ENCODE measurements at regions of chr1 and their contacts with region 1.

Region 1: DNA sequence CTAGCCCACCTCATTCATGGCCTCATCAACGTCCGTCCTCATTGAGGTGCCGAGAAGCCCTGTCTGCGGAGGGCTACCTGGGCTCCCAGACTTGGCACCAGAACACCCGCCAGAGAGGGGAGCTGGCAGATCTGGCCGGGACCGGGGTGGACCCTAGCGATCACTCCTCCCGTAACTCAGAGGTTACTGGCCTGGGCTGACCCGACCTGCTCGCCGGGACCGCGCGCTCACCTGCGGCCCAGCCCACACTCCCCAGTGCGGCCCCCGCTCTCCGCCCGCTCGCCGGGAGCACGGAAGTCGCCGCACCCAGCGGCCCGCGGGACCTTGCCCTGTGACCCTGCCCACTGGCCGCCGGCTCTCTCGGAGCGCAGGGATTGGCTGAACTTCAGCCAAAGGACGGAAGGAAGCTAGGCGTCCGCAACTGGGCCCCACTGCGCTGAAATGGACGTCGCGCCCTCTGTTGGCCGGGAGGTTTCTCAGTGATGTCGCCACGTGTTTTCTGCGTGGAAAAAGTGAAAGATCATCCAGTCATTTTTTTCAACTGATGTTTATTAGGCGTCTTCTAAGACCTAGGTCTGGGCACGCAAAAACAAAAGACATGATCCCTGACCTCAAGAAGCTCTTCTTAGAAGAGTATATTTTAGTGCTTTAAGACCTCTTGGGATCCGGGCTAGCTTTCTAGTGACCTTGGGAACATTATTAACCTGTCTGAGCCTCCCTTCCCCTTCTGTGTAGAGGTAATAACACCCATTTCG is at the start of gene SMIM12:
- DNase-seq: peak; percentile 76 to 94 (median 92)
- ATAC-seq: peak; percentile 84
- H3K4me3 ChIP-seq: peak within 1 kb of the TSS; percentile 78 to 89
- H3K4me3 Mint-ChIP-seq: peak within 1 kb of the TSS; percentile 90
- H3K27ac ChIP-seq: peak within 1 kb of the TSS; percentile 69 to 89
- H3K27ac Mint-ChIP-seq: peak within 1 kb of the TSS; percentile 96
- H3K4me1 ChIP-seq: peaks cover 46% of the 10 kb centered on the region
- H3K4me1 Mint-ChIP-seq: peaks cover 63% of the 10 kb centered on the region
- H3K27me3 ChIP-seq: no peaks in the 10 kb centered on the region
- H3K27me3 Mint-ChIP-seq: no peaks in the 10 kb centered on the region
- CTCF ChIP-seq: peak; percentile 73
- total RNA-seq, gene SMIM12: 46.6 to 48.7 TPM

Region 2: GRCh38 chr1:34824817-34825454 is 34.7 kb before region 1 on chr1:
- CTCF ChIA-PET with region 1: no interaction called
- POLR2A ChIA-PET with region 1: no interaction called
- intact Hi-C with region 1: no loop called
- DNase-seq: no peak
- ATAC-seq: no peak
- H3K4me3 ChIP-seq: no peak overlapping the region
- H3K4me3 Mint-ChIP-seq: no peak overlapping the region
- H3K27ac ChIP-seq: no peak overlapping the region
- H3K27ac Mint-ChIP-seq: no peak overlapping the region
- H3K4me1 ChIP-seq: no peaks in the 10 kb centered on the region
- H3K4me1 Mint-ChIP-seq: no peaks in the 10 kb centered on the region
- H3K27me3 ChIP-seq: no peaks in the 10 kb centered on the region
- H3K27me3 Mint-ChIP-seq: no peaks in the 10 kb centered on the region
- CTCF ChIP-seq: no peak

Region 3: DNA sequence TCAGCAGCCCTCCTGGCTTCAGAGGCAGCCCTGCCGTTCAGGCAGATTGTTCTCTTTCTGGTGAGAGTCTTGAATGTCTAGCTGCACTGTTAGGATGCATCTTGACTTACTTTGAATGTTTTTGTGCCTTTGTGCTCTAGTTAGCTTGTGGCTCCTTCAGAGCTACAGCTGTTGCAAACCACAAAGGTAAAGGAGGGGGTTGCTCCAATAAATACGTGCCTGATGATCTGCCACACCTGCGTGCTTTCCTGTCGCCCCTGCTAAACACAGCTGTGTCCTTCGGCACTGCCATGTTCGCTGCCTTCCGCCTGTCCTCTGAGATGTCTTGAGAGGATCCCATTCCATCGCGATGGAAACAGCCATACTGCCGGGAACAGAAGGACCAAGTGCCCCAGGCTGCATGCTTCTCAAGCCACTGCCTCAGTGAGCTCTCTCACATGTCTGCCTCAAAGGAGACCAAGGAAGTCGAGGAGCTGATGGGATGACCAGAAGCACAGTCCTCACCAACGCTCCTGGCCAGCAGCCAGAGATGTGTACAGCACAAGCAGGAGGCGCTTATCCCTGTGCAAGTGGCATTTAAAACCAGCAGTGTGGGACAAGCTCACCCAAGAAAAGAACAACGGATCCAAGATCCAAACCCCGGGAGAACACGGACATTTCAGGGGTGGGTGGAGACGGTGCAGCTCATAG is 12.0 kb after region 1 on chr1:
- CTCF ChIA-PET with region 1: interaction called, 129 read pairs
- POLR2A ChIA-PET with region 1: interaction called, 3 read pairs
- intact Hi-C with region 1: no loop called
- DNase-seq: peak in 1 of 9 experiments; percentile 35
- ATAC-seq: peak; percentile 59
- H3K4me3 ChIP-seq: no peak overlapping the region
- H3K4me3 Mint-ChIP-seq: peak overlapping the region; percentile 59
- H3K27ac ChIP-seq: no peak overlapping the region
- H3K27ac Mint-ChIP-seq: peak overlapping the region; percentile 81
- H3K4me1 ChIP-seq: peaks cover 27% of the 10 kb centered on the region
- H3K4me1 Mint-ChIP-seq: peaks cover 27% of the 10 kb centered on the region
- H3K27me3 ChIP-seq: no peaks in the 10 kb centered on the region
- H3K27me3 Mint-ChIP-seq: peaks cover 16% of the 10 kb centered on the region
- CTCF ChIP-seq: no peak

Region 4: DNA sequence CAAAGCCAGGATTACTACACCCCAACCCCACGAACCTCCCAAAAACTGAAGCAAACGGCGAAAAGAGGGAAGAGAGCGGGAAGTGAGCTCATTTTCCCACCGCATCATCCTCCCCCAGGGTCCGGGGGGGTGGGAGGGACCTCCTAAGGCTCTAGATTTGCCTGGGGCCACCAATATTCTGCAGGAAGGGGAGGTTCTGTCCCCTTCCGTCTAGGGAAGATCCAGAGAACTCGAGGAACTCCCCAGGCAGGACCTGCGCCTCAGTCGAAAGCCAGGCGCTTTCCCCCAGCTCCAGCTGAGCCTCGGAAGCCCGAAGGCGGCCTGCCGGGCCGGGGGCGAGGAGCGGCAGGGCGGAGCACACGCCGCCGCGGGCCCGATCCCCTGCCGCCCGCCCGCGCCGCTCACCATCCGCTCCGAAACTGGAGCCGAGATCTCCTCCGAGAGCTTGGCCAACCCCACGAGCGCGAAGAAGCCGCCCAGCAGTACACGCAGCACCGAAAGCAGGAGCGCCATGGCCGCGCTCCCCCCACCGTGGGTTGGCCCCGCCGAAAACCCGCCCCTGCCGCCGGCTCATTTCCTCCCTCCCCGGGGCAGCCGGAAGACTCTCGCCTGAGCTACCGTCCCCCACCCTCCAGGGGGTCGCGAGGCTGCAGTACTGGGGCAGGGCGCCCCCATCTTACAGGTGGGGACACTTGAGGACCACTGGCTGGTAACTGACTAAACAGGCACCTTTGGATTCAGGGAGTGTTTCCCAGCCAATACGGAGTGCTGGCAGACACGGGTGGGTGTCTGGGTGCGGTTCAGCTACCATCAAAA is 125.4 kb after region 1 on chr1 and contains the start of gene TMEM35B:
- CTCF ChIA-PET with region 1: no interaction called
- POLR2A ChIA-PET with region 1: interaction called, 3 read pairs
- intact Hi-C with region 1: loop called in 1 of 2 experiments (anchors 2 kb)
- DNase-seq: peak; percentile 55 to 87 (median 82)
- ATAC-seq: peak; percentile 96
- H3K4me3 ChIP-seq: peak within 1 kb of the TSS; percentile 77 to 81
- H3K4me3 Mint-ChIP-seq: peak within 1 kb of the TSS; percentile 99
- H3K27ac ChIP-seq: peak within 1 kb of the TSS; percentile 80 to 87
- H3K27ac Mint-ChIP-seq: peak within 1 kb of the TSS; percentile 98
- H3K4me1 ChIP-seq: peaks cover 28% of the 10 kb centered on the region
- H3K4me1 Mint-ChIP-seq: peaks cover 42% of the 10 kb centered on the region
- H3K27me3 ChIP-seq: no peaks in the 10 kb centered on the region
- H3K27me3 Mint-ChIP-seq: no peaks in the 10 kb centered on the region
- CTCF ChIP-seq: no peak
- total RNA-seq, gene TMEM35B: 1.0 to 2.6 TPM

Region 5: GRCh38 chr1:35062518-35063196 is 203.0 kb after region 1 on chr1:
- CTCF ChIA-PET with region 1: no interaction called
- POLR2A ChIA-PET with region 1: no interaction called
- intact Hi-C with region 1: no loop called
- DNase-seq: no peak
- ATAC-seq: no peak
- H3K4me3 ChIP-seq: no peak overlapping the region
- H3K4me3 Mint-ChIP-seq: no peak overlapping the region
- H3K27ac ChIP-seq: no peak overlapping the region
- H3K27ac Mint-ChIP-seq: no peak overlapping the region
- H3K4me1 ChIP-seq: no peaks in the 10 kb centered on the region
- H3K4me1 Mint-ChIP-seq: no peaks in the 10 kb centered on the region
- H3K27me3 ChIP-seq: no peaks in the 10 kb centered on the region
- H3K27me3 Mint-ChIP-seq: peaks cover 34% of the 10 kb centered on the region
- CTCF ChIP-seq: no peak

Region 6: GRCh38 chr1:35079003-35079930 is 219.6 kb after region 1 on chr1 and contains the start of gene ZMYM1:
- CTCF ChIA-PET with region 1: no interaction called
- POLR2A ChIA-PET with region 1: no interaction called
- intact Hi-C with region 1: loop called in 1 of 2 experiments (anchors 2 kb)
- DNase-seq: peak; percentile 49 to 89 (median 84)
- ATAC-seq: peak; percentile 92
- H3K4me3 ChIP-seq: peak within 1 kb of the TSS; percentile 82 to 83
- H3K4me3 Mint-ChIP-seq: peak within 1 kb of the TSS; percentile 98
- H3K27ac ChIP-seq: peak within 1 kb of the TSS; percentile 85 to 95
- H3K27ac Mint-ChIP-seq: peak within 1 kb of the TSS; percentile 99
- H3K4me1 ChIP-seq: peaks cover 16% of the 10 kb centered on the region
- H3K4me1 Mint-ChIP-seq: peaks cover 37% of the 10 kb centered on the region
- H3K27me3 ChIP-seq: no peaks in the 10 kb centered on the region
- H3K27me3 Mint-ChIP-seq: peaks cover 8% of the 10 kb centered on the region
- CTCF ChIP-seq: no peak
- total RNA-seq, gene ZMYM1: 3.7 to 6.0 TPM

Measured in CD8-positive, alpha-beta T cell (primary cell).